ENCODE measurements at regions of chr5 and their contacts with region 1.

Region 1: GRCh38 chr5:139560752-139561654 is at the start of gene UBE2D2:
- DNase-seq: peak; percentile 99
- ATAC-seq: peak; percentile 89
- H3K4me3 Mint-ChIP-seq: peak within 1 kb of the TSS; percentile 99
- H3K27ac Mint-ChIP-seq: peak within 1 kb of the TSS; percentile 99
- H3K4me1 Mint-ChIP-seq: peaks cover 27% of the 10 kb centered on the region
- H3K27me3 Mint-ChIP-seq: no peaks in the 10 kb centered on the region
- total RNA-seq, gene UBE2D2: 262 to 289 TPM

Region 2: GRCh38 chr5:138464008-138464387 is 1097.0 kb before region 1 on chr5:
- CTCF ChIA-PET with region 1: no interaction called
- POLR2A ChIA-PET with region 1: no interaction called
- intact Hi-C with region 1: loop called in 1 of 2 experiments (anchors 10 kb)
- DNase-seq: peak; percentile 97
- ATAC-seq: peak; percentile 54
- H3K4me3 Mint-ChIP-seq: peak overlapping the region; percentile 77
- H3K27ac Mint-ChIP-seq: peak overlapping the region; percentile 94
- H3K4me1 Mint-ChIP-seq: peaks cover 58% of the 10 kb centered on the region
- H3K27me3 Mint-ChIP-seq: no peaks in the 10 kb centered on the region

Region 3: DNA sequence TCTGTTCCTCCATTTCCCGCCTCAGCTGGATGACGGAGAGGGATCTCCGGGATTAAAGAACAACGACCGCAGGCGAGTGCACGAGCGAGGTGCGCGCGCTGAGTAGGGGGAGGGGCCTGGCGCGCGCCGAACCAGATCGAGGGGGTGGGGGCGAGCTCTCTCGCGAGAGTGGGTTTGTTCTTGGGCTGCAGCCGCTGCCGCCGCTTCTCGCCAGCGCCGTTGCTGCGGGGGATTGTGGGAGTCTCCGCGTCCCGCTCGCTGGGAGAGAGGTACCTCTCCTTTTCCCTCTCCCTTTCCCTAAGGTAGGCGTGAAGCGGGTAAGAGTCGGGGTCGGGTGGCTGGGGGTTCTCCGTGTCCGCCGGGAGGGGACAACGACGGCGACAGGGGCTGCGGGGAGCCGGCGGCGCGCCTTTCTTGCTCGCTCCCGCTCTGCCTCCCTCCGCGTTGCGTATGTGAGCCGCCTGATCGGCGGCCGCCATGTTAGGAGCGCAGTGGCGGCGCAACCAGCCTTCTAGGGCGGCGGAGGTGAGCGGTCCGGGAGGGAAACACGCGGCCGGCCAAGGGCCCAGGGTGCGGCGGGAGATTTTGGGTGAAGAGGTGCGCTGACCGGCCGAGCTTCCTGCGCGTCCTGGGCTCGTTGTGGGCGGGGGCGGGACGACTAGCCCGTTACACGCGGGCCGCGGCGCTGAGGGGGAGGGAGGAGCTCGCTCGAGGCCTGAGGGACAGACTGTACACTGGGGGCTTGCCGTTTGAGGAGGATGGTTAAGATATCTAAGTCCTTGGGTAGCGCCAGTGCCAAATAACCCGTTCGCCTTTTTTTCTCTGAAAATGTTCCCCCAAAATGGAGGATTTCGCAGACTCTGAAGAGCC is 267.3 kb before region 1 on chr5 and contains the start of gene MATR3:
- CTCF ChIA-PET with region 1: no interaction called
- POLR2A ChIA-PET with region 1: no interaction called
- intact Hi-C with region 1: loop called in 1 of 2 experiments (anchors 1 kb)
- DNase-seq: peak; percentile 98
- ATAC-seq: peak; percentile 92
- H3K4me3 Mint-ChIP-seq: peak within 1 kb of the TSS; percentile 97
- H3K27ac Mint-ChIP-seq: peak within 1 kb of the TSS; percentile 99
- H3K4me1 Mint-ChIP-seq: peaks cover 37% of the 10 kb centered on the region
- H3K27me3 Mint-ChIP-seq: no peaks in the 10 kb centered on the region
- total RNA-seq, gene MATR3: 113 to 133 TPM

Region 4: DNA sequence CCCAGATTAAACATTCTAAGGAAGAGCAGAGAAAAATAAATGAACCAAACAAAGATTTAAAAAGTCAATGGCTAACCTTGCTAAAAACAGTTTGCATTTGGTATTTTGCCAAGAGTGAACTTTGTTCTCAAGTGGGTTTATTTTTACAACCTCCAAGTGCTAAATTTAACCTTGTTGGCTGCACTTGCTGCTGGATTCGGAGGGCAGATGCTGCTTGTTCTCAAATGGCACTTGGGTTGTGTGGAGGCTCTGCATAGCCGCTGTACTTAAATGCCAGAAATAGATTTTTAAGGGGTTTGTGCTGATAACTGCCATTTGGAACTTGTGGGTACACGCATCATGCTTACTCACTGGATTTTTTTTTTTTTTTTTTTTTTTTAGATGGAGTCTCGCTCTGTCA is 143.8 kb before region 1 on chr5:
- CTCF ChIA-PET with region 1: interaction called, 15 read pairs
- POLR2A ChIA-PET with region 1: no interaction called
- intact Hi-C with region 1: loop called in 1 of 2 experiments (anchors 1 kb)
- DNase-seq: no peak
- ATAC-seq: no peak
- H3K4me3 Mint-ChIP-seq: no peak overlapping the region
- H3K27ac Mint-ChIP-seq: peak overlapping the region; percentile 98
- H3K4me1 Mint-ChIP-seq: peaks cover 50% of the 10 kb centered on the region
- H3K27me3 Mint-ChIP-seq: no peaks in the 10 kb centered on the region

Region 5: GRCh38 chr5:139482050-139482889 is 78.7 kb before region 1 on chr5 and contains the start of gene STING1:
- CTCF ChIA-PET with region 1: interaction called, 3 read pairs
- POLR2A ChIA-PET with region 1: interaction called, 8 read pairs
- intact Hi-C with region 1: loop called in 1 of 2 experiments (anchors 1 kb)
- DNase-seq: peak; percentile 84
- ATAC-seq: peak; percentile 64
- H3K4me3 Mint-ChIP-seq: peak within 1 kb of the TSS; percentile 88
- H3K27ac Mint-ChIP-seq: peak within 1 kb of the TSS; percentile 99
- H3K4me1 Mint-ChIP-seq: peaks cover 35% of the 10 kb centered on the region
- H3K27me3 Mint-ChIP-seq: no peaks in the 10 kb centered on the region
- total RNA-seq, gene STING1: 178 to 183 TPM

Region 6: GRCh38 chr5:139492700-139493192 is 68.3 kb before region 1 on chr5:
- CTCF ChIA-PET with region 1: no interaction called
- POLR2A ChIA-PET with region 1: no interaction called
- intact Hi-C with region 1: no loop called
- DNase-seq: no peak
- ATAC-seq: peak; percentile 40
- H3K4me3 Mint-ChIP-seq: no peak overlapping the region
- H3K27ac Mint-ChIP-seq: peak overlapping the region; percentile 6
- H3K4me1 Mint-ChIP-seq: peaks cover 30% of the 10 kb centered on the region
- H3K27me3 Mint-ChIP-seq: no peaks in the 10 kb centered on the region

Region 7: DNA sequence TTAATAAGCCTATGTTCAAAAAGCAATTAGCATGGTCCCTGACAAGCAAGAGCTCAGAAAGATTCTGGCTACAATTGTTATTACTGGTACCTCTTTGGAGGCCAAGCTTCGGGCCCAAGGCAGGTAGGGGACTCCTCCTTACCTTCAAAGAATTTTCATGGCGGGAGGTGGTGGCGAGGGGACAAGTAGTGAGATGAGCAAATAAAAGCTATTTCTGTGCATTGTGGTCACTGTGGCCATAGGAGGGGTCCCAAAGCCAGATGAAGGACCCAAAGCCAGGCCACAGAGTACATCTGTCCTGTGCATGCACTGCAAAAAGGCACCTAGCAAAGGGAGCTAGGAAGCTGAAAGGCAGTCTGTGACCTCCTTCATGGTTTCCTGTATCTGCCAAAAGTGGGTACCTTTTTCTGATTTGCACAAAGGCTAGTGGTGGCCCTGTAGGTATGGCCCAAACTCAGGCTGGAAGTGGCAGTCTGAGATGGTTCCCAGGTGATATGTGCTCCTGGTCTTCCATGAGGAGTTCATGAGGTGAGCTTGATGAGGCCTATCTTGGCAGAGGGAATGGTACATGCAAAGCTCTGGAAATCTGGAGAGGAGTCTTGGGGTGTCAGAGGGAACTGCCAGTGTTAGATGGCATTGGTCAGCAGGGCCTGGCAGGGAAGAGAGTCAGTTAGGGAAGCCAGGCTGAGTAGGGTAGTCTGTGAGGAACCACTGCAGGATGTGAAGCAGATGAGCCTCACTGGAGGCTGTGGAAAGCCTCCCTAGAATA is 83.8 kb after region 1 on chr5:
- CTCF ChIA-PET with region 1: no interaction called
- POLR2A ChIA-PET with region 1: interaction called, 11 read pairs
- intact Hi-C with region 1: no loop called
- DNase-seq: peak; percentile 9
- ATAC-seq: no peak
- H3K4me3 Mint-ChIP-seq: no peak overlapping the region
- H3K27ac Mint-ChIP-seq: no peak overlapping the region
- H3K4me1 Mint-ChIP-seq: peaks cover 9% of the 10 kb centered on the region
- H3K27me3 Mint-ChIP-seq: peaks cover 24% of the 10 kb centered on the region